Transverse colon (tissue), 4 donors: ENCODE measurements at regions of chr1 and their contacts with region 1.

Region 1: GRCh38 chr1:51044834-51045233 is 57.2 kb upstream of the C1orf185 start:
- DNase-seq: no peak
- H3K4me3 ChIP-seq: no peak overlapping the region
- H3K27ac ChIP-seq: no peak overlapping the region
- H3K4me1 ChIP-seq: no peaks in the 10 kb centered on the region
- H3K27me3 ChIP-seq: no peaks in the 10 kb centered on the region
- CTCF ChIP-seq: peak in 3 of 5 experiments; percentile 20 to 38 (median 20)
- EP300 ChIP-seq: no peak
- POLR2A ChIP-seq: no peak

Region 2: GRCh38 chr1:50929376-50929958 is 115.4 kb before region 1 on chr1:
- in situ Hi-C with region 1: loop called in 1 of 4 experiments (anchors 25 kb)
- intact Hi-C with region 1: no loop called
- DNase-seq: no peak
- H3K4me3 ChIP-seq: no peak overlapping the region
- H3K27ac ChIP-seq: no peak overlapping the region
- H3K4me1 ChIP-seq: peaks cover 0 to 16% (median 7%) of the 10 kb centered on the region in 4 donors
- H3K27me3 ChIP-seq: no peaks in the 10 kb centered on the region
- CTCF ChIP-seq: peak; percentile 54 to 63 (median 57)
- EP300 ChIP-seq: no peak
- POLR2A ChIP-seq: no peak